ENCODE measurements at regions of chr6 and their contacts with region 1.

Region 1: DNA sequence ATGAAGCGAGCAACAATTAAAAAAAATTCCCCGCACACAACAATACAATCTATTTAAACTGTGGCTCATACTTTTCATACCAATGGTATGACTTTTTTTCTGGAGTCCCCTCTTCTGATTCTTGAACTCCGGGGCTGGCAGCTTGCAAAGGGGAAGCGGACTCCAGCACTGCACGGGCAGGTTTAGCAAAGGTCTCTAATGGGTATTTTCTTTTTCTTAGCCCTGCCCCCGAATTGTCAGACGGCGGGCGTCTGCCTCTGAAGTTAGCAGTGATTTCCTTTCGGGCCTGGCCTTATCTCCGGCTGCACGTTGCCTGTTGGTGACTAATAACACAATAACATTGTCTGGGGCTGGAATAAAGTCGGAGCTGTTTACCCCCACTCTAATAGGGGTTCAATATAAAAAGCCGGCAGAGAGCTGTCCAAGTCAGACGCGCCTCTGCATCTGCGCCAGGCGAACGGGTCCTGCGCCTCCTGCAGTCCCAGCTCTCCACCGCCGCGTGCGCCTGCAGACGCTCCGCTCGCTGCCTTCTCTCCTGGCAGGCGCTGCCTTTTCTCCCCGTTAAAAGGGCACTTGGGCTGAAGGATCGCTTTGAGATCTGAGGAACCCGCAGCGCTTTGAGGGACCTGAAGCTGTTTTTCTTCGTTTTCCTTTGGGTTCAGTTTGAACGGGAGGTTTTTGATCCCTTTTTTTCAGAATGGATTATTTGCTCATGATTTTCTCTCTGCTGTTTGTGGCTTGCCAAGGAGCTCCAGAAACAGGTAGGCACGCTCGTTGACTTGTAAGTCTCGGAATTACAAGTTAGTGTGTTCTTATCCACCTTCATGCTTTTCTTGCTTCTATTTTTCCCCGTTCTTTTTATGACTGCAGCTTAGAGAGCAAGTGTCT is at the start of gene EDN1:
- DNase-seq: peak; percentile 58 to 77 (median 64)
- H3K4me3 ChIP-seq: peak within 1 kb of the TSS; percentile 44 to 80 (median 78)
- H3K4me3 Mint-ChIP-seq: peak within 1 kb of the TSS; percentile 88 to 98
- H3K27ac ChIP-seq: no peak within 1 kb of the TSS
- H3K27ac Mint-ChIP-seq: peak within 1 kb of the TSS; percentile 28 to 90 (median 81)
- H3K4me1 ChIP-seq: peaks cover 32 to 37% of the 10 kb centered on the region in 2 donors
- H3K4me1 Mint-ChIP-seq: peaks cover 51% of the 10 kb centered on the region
- H3K27me3 ChIP-seq: peaks cover 24 to 32% of the 10 kb centered on the region in 2 donors
- H3K27me3 Mint-ChIP-seq: peaks cover 30 to 40% (median 39%) of the 10 kb centered on the region in 3 donors
- CTCF ChIP-seq: peak; percentile 24
- polyA plus RNA-seq, gene EDN1: 0.11 to 0.71 TPM in 2 of 3 donors, not detected in the other

Region 2: GRCh38 chr6:11653028-11653583 is 637.1 kb before region 1 on chr6:
- intact Hi-C with region 1: loop called in 1 of 2 experiments (anchors 5 kb)
- DNase-seq: peak in 2 of 3 donors; percentile 7 to 55
- H3K4me3 ChIP-seq: no peak overlapping the region
- H3K4me3 Mint-ChIP-seq: no peak overlapping the region
- H3K27ac ChIP-seq: no peak overlapping the region
- H3K27ac Mint-ChIP-seq: no peak overlapping the region
- H3K4me1 ChIP-seq: no peaks in the 10 kb centered on the region
- H3K4me1 Mint-ChIP-seq: peaks cover 7% of the 10 kb centered on the region
- H3K27me3 ChIP-seq: no peaks in the 10 kb centered on the region
- H3K27me3 Mint-ChIP-seq: peaks cover 5 to 14% (median 7%) of the 10 kb centered on the region in 3 donors
- CTCF ChIP-seq: no peak

Region 3: DNA sequence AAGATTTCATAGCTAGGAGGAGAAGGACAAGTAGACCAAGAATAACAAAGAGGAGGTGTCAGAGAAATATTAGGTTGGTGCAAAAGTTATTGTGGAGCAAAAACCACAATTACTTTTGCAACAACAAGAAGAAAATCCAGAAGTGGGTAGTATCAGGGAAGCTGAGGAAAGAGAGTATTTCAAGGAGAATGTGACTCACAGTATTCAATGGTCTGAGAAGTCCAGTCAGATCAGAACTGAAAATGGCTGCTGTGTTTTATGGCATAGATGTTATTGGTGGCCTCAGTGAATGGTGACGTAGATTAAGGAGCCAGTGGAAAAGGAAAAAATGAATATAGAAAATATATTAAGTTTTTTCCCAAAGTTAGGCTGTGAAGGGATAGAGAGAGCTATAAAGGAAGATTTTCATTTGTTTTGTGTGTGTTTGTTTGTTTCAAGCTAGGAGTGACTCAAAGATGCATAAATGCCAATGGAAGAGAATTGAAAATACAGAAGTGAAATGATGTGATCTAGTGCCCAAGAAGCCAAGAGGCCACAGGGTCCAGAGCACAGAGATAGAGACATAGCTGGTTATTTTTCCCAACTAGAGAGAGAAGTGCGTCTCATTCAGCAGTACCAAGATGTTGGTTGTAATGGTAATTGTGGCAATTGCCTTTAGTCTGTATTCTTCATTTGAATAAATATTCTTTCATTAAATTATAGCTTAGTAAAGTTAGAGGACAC is 624.4 kb before region 1 on chr6:
- intact Hi-C with region 1: loop called in 1 of 2 experiments (anchors 10 kb)
- DNase-seq: peak in 1 of 3 donors; percentile 16
- H3K4me3 ChIP-seq: no peak overlapping the region
- H3K4me3 Mint-ChIP-seq: no peak overlapping the region
- H3K27ac ChIP-seq: no peak overlapping the region
- H3K27ac Mint-ChIP-seq: no peak overlapping the region
- H3K4me1 ChIP-seq: no peaks in the 10 kb centered on the region
- H3K4me1 Mint-ChIP-seq: peaks cover 4% of the 10 kb centered on the region
- H3K27me3 ChIP-seq: peaks cover 0 to 2% of the 10 kb centered on the region in 2 donors
- H3K27me3 Mint-ChIP-seq: peaks cover 0 to 1% (median 0%) of the 10 kb centered on the region in 3 donors
- CTCF ChIP-seq: no peak

Region 4: DNA sequence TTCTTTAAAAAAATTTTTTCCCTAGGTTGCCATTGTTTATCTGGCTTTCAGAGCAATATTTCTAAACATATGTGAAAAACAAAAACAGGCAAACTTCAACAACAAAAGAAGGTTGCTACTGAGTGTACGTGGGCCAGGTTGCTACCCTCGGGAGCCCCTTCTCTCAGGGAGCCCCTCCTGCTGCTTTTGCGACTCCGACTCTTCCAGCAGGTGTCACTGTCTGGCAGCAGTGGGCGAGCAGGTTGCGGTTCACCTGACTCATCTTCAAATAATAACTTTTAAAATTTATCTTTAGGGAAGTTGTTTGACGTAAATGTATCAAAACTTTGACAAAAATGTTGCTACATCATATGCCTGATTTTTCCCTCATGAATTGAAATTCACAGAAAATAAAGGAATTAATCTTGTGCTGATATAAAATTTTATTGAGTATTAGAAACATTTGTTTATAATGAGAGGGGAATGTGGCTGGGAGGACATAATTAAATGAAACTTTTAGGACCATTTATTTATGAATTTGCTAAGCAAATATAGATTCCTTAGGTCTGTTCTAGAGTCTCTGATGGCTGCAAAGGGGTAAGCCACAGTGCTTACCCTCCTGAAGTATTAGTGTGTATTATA is 139.3 kb before region 1 on chr6:
- intact Hi-C with region 1: loop called in 1 of 2 experiments (anchors 5 kb)
- DNase-seq: peak in 2 of 3 donors; percentile 11 to 52
- H3K4me3 ChIP-seq: no peak overlapping the region
- H3K4me3 Mint-ChIP-seq: no peak overlapping the region
- H3K27ac ChIP-seq: no peak overlapping the region
- H3K27ac Mint-ChIP-seq: no peak overlapping the region
- H3K4me1 ChIP-seq: no peaks in the 10 kb centered on the region
- H3K4me1 Mint-ChIP-seq: no peaks in the 10 kb centered on the region
- H3K27me3 ChIP-seq: no peaks in the 10 kb centered on the region
- H3K27me3 Mint-ChIP-seq: peaks cover 0 to 1% (median 0%) of the 10 kb centered on the region in 3 donors
- CTCF ChIP-seq: peak; percentile 62

Region 5: GRCh38 chr6:12241493-12242175 is 48.5 kb before region 1 on chr6:
- intact Hi-C with region 1: loop called (anchors 5 kb)
- DNase-seq: peak; percentile 32 to 71 (median 68)
- H3K4me3 ChIP-seq: peak overlapping the region in 1 of 3 experiments; percentile 31
- H3K4me3 Mint-ChIP-seq: peak overlapping the region in 1 of 2 donors; percentile 73
- H3K27ac ChIP-seq: no peak overlapping the region
- H3K27ac Mint-ChIP-seq: peak overlapping the region in 4 of 7 donors; percentile 57 to 71 (median 59)
- H3K4me1 ChIP-seq: peaks cover 32% of the 10 kb centered on the region in 2 donors
- H3K4me1 Mint-ChIP-seq: peaks cover 39% of the 10 kb centered on the region
- H3K27me3 ChIP-seq: no peaks in the 10 kb centered on the region
- H3K27me3 Mint-ChIP-seq: peaks cover 3 to 4% (median 4%) of the 10 kb centered on the region in 3 donors
- CTCF ChIP-seq: no peak

Region 6: GRCh38 chr6:12354499-12354898 is 64.3 kb after region 1 on chr6:
- intact Hi-C with region 1: loop called in 1 of 2 experiments (anchors 5 kb)
- DNase-seq: no peak
- H3K4me3 ChIP-seq: no peak overlapping the region
- H3K4me3 Mint-ChIP-seq: no peak overlapping the region
- H3K27ac ChIP-seq: no peak overlapping the region
- H3K27ac Mint-ChIP-seq: no peak overlapping the region
- H3K4me1 ChIP-seq: peaks cover 25% of the 10 kb centered on the region in 2 donors
- H3K4me1 Mint-ChIP-seq: peaks cover 12% of the 10 kb centered on the region
- H3K27me3 ChIP-seq: peaks cover 2 to 4% of the 10 kb centered on the region in 2 donors
- H3K27me3 Mint-ChIP-seq: peaks cover 0 to 5% (median 3%) of the 10 kb centered on the region in 3 donors
- CTCF ChIP-seq: no peak